ENCODE measurements at regions of chr17 and their contacts with region 1.

Region 1: DNA sequence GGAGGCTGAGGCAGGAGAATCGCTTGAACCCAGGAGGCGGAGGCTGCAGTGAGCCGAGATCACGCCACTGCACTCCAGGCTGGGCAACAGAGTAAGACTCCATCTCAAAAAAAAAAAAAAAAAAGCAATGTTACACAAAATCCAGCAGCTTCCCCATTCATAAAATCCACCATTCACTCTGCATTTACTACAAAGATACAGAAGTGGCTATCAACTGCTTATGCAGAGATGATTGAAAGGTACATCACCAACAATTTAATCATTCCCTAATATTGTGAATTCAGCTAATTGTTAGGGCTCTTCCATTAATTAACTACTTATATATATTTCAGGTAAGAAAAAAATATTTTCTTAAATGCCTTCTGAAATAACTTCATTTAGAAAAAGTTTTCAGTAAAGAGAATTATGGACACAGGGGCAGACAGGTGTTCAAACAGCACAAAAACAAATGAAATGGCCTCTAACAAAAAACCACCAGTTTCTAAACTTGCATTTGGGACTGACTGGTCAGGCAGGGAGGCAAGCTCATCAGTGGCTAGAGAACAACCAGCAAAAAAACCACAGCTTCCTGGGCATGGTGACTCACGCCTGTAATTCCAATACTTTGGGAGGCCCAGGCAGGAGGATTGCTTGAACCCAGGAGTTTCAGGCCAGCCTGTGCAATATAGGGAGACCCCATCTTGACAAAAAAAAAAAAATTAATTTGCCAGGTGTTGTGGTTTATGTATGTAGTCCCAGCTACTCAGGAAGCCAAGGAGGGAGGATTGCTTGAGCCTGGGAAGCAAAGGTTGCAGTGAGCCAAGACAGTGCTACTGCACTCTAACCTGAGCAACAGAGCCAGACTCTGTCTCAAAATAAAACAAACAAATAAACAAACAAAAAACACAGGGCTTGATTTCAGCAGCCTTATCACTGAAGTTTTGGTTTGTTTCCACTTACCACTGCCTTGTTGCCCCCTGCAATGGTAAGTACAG is 26.3 kb downstream of the ERN1 start:
- DNase-seq: no peak
- H3K4me3 ChIP-seq: no peak overlapping the region
- H3K27ac ChIP-seq: no peak overlapping the region
- H3K4me1 ChIP-seq: peaks cover 4% of the 10 kb centered on the region
- H3K27me3 ChIP-seq: no peaks in the 10 kb centered on the region
- CTCF ChIP-seq: no peak
- POLR2A ChIP-seq: no peak

Region 2: DNA sequence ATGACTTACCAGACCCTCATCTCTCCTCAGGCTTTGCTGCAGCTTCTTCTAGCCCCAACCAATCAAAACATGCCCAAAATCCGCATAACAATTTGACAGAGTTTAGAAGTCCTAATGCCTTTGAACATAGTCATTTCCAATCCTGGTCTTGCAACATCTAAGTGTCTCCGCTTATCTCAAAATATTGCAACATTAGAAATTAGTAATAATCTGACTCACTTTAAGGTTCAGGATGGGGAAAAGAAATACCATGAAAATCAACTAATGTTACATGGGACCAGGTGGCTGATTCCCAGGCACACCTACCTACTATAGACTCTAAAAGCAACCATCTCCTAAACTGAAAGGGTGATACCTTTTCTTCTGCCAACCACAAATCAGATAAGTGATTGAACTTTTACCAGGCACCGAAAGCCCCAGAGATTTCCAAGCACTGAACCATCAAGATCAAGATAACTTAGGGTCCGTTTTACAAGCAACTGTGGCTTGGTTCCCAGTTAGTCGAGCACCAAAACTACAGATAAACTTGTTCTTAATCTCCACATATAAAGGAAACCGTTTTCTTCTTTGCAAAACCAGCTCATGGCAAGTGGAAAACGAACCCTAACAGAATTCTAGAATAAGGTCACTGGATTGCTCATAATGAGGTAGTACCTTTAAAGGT is 12.3 kb after region 1 on chr17:
- CTCF ChIA-PET with region 1: interaction called, 18 read pairs
- POLR2A ChIA-PET with region 1: no interaction called
- dilution Hi-C with region 1: no loop called
- intact Hi-C with region 1: no loop called
- DNase-seq: no peak
- H3K4me3 ChIP-seq: no peak overlapping the region
- H3K27ac ChIP-seq: no peak overlapping the region
- H3K4me1 ChIP-seq: no peaks in the 10 kb centered on the region
- H3K27me3 ChIP-seq: no peaks in the 10 kb centered on the region
- CTCF ChIP-seq: no peak
- POLR2A ChIP-seq: no peak

Region 3: GRCh38 chr17:64291254-64291851 is 187.7 kb after region 1 on chr17:
- CTCF ChIA-PET with region 1: no interaction called
- POLR2A ChIA-PET with region 1: no interaction called
- dilution Hi-C with region 1: no loop called
- intact Hi-C with region 1: no loop called
- DNase-seq: no peak
- H3K4me3 ChIP-seq: no peak overlapping the region
- H3K27ac ChIP-seq: no peak overlapping the region
- H3K4me1 ChIP-seq: no peaks in the 10 kb centered on the region
- H3K27me3 ChIP-seq: no peaks in the 10 kb centered on the region
- CTCF ChIP-seq: peak in 1 of 2 donors; percentile 48
- POLR2A ChIP-seq: no peak

Region 4: DNA sequence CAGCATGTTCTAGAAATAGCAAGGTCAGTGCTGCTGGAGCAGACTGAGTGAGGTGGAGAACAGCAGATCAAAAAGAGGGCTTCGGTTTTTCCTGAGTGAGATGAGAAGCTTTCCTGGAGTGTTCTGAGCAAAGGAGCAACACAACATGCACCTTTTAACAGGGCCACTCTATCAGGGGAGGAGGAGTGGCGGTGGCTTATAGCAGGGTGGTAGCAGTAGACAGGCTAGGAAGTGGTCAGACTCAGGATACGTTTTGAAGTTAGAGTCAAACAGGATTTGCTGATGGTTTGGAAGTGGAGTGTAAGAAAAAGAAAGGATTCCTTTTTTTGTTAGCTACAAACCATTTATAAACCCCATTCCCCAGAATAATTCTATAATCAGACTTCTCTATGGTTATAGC is 380.7 kb after region 1 on chr17:
- CTCF ChIA-PET with region 1: no interaction called
- POLR2A ChIA-PET with region 1: no interaction called
- dilution Hi-C with region 1: no loop called
- intact Hi-C with region 1: no loop called
- DNase-seq: no peak
- H3K4me3 ChIP-seq: no peak overlapping the region
- H3K27ac ChIP-seq: no peak overlapping the region
- H3K4me1 ChIP-seq: no peaks in the 10 kb centered on the region
- H3K27me3 ChIP-seq: no peaks in the 10 kb centered on the region
- CTCF ChIP-seq: no peak
- POLR2A ChIP-seq: no peak

Measured in endothelial cell of umbilical vein (primary cell).